Caco-2 (cell line): ENCODE measurements at regions of chr6 and their contacts with region 1.

Region 1: GRCh38 chr6:159806021-159806458 is 6.0 kb downstream of the PNLDC1 start:
- DNase-seq: peak; percentile 39 to 60
- H3K4me3 ChIP-seq: no peak overlapping the region
- H3K4me3 Mint-ChIP-seq: no peak overlapping the region
- H3K27ac Mint-ChIP-seq: peak overlapping the region; percentile 61
- H3K4me1 ChIP-seq: peaks cover 42% of the 10 kb centered on the region
- H3K4me1 Mint-ChIP-seq: peaks cover 26% of the 10 kb centered on the region
- H3K27me3 ChIP-seq: no peaks in the 10 kb centered on the region
- H3K27me3 Mint-ChIP-seq: no peaks in the 10 kb centered on the region
- CTCF ChIP-seq: no peak

Region 2: GRCh38 chr6:159490298-159490937 is 315.6 kb before region 1 on chr6:
- CTCF ChIA-PET with region 1: no interaction called
- POLR2A ChIA-PET with region 1: no interaction called
- intact Hi-C with region 1: no loop called
- DNase-seq: no peak
- H3K4me3 ChIP-seq: no peak overlapping the region
- H3K4me3 Mint-ChIP-seq: no peak overlapping the region
- H3K27ac Mint-ChIP-seq: no peak overlapping the region
- H3K4me1 ChIP-seq: no peaks in the 10 kb centered on the region
- H3K4me1 Mint-ChIP-seq: no peaks in the 10 kb centered on the region
- H3K27me3 ChIP-seq: no peaks in the 10 kb centered on the region
- H3K27me3 Mint-ChIP-seq: peaks cover 16% of the 10 kb centered on the region
- CTCF ChIP-seq: no peak

Region 3: DNA sequence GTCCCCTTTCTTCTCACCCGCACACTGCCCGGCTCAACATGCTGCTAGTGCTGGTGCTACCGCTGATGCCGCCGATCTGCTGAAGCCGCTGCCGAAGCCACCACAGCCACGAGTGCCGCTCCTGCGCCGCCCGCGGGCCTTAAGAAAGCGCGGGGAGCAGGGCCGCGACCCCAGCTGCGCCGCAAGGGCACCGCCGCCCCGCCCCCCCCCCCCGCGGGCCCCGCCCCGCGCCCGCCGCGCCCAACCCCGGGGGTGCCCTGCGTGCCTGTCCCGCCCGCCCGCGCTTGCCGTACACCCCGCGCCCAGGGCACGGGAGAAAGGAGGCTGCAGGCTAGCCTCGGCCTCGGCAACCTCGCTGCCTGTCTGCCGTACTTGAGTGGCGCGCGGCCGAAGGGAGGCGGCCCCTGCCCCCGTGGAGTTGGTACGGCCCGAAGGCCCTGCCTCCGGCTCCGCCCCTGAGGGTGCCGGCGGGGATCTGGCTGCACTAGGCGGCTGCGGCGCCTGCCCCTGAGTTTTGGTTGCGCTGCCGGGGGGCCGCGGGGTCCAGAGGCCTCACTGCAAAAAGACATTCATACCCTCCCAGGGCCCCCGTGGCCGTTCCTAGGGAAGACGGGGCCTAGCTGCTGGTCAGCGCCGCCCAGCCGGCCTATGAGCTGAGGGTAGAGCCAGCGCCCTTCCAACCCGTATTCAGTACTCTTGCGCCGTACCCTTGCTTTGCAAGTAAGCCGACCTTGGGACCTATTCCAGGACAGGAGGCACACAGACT is 112.7 kb before region 1 on chr6 and contains the start of gene SOD2:
- CTCF ChIA-PET with region 1: no interaction called
- POLR2A ChIA-PET with region 1: no interaction called
- intact Hi-C with region 1: no loop called
- DNase-seq: peak; percentile 90 to 92
- H3K4me3 ChIP-seq: peak within 1 kb of the TSS; percentile 59
- H3K4me3 Mint-ChIP-seq: peak within 1 kb of the TSS; percentile 72
- H3K27ac Mint-ChIP-seq: peak within 1 kb of the TSS; percentile 80
- H3K4me1 ChIP-seq: peaks cover 4% of the 10 kb centered on the region
- H3K4me1 Mint-ChIP-seq: peaks cover 16% of the 10 kb centered on the region
- H3K27me3 ChIP-seq: no peaks in the 10 kb centered on the region
- H3K27me3 Mint-ChIP-seq: no peaks in the 10 kb centered on the region
- CTCF ChIP-seq: no peak
- total RNA-seq, gene SOD2: 109 and 110 TPM in 2 replicates

Region 4: DNA sequence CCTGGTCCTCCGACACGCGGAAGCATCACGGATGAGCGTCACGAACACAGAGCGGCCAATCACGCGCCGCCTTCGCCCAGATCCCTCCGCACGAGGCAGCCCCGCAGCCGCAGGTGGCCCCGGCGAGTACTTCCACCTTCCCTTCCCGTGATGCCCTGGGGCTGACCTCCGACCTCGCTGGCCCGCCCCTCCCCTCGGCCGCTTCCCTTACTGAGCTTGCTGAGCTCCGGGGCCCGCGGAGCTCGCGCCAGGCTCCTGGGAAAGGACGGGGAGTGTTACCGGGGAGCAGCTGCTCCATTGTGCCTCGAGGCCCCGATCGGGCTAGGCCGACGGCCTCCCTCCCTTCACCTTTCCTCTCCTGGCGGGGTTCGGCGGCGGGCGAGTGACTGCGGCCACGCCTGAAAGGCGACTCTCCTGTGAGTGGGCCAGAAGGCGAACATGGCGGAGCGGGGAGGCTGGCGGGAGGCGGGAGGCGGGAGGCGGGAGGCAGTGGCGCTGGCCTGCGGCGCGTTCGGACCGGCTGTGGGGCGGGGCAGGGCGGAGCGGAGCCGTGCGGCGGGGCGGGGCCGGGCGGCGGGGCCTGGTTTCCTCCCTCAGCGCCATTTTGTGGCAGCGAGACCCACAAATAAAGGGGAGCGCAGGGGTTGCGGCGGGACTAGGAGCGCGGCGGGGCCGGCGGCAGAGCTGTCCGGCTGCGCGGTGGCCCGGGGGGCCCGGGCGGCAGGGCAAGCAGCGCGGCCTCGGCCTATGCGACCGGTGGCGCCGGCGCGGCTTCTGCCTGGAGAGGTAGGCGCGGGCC is 78.9 kb before region 1 on chr6 and contains the start of gene WTAP:
- CTCF ChIA-PET with region 1: interaction called, 3 read pairs
- POLR2A ChIA-PET with region 1: interaction called, 11 read pairs
- intact Hi-C with region 1: no loop called
- DNase-seq: peak; percentile 98
- H3K4me3 ChIP-seq: peak within 1 kb of the TSS; percentile 96
- H3K4me3 Mint-ChIP-seq: peak within 1 kb of the TSS; percentile 97
- H3K27ac Mint-ChIP-seq: peak within 1 kb of the TSS; percentile 96
- H3K4me1 ChIP-seq: peaks cover 3% of the 10 kb centered on the region; the same call in 1 of the 2 replicates
- H3K4me1 Mint-ChIP-seq: peaks cover 6% of the 10 kb centered on the region
- H3K27me3 ChIP-seq: no peaks in the 10 kb centered on the region
- H3K27me3 Mint-ChIP-seq: no peaks in the 10 kb centered on the region
- CTCF ChIP-seq: no peak
- total RNA-seq, gene WTAP: 109 and 114 TPM in 2 replicates

Region 5: GRCh38 chr6:159761873-159762680 is 44.0 kb before region 1 on chr6 and contains the start of gene ACAT2:
- CTCF ChIA-PET with region 1: no interaction called
- POLR2A ChIA-PET with region 1: no interaction called
- intact Hi-C with region 1: loop called (anchors 1 kb)
- DNase-seq: peak; percentile 96 to 98
- H3K4me3 ChIP-seq: peak within 1 kb of the TSS; percentile 84
- H3K4me3 Mint-ChIP-seq: peak within 1 kb of the TSS; percentile 82
- H3K27ac Mint-ChIP-seq: peak within 1 kb of the TSS; percentile 98
- H3K4me1 ChIP-seq: peaks cover 16% of the 10 kb centered on the region
- H3K4me1 Mint-ChIP-seq: peaks cover 37% of the 10 kb centered on the region
- H3K27me3 ChIP-seq: no peaks in the 10 kb centered on the region
- H3K27me3 Mint-ChIP-seq: no peaks in the 10 kb centered on the region
- CTCF ChIP-seq: no peak
- total RNA-seq, gene ACAT2: 122 and 131 TPM in 2 replicates

Region 6: GRCh38 chr6:159789377-159790148 is 16.5 kb before region 1 on chr6 and contains the start of gene TCP1:
- CTCF ChIA-PET with region 1: interaction called, 7 read pairs
- POLR2A ChIA-PET with region 1: interaction called, 42 read pairs
- intact Hi-C with region 1: loop called (anchors 1 kb)
- DNase-seq: peak; percentile 98 to 99
- H3K4me3 ChIP-seq: peak within 1 kb of the TSS; percentile 95
- H3K4me3 Mint-ChIP-seq: peak within 1 kb of the TSS; percentile 96
- H3K27ac Mint-ChIP-seq: peak within 1 kb of the TSS; percentile 98
- H3K4me1 ChIP-seq: peaks cover 18% of the 10 kb centered on the region
- H3K4me1 Mint-ChIP-seq: peaks cover 18% of the 10 kb centered on the region
- H3K27me3 ChIP-seq: no peaks in the 10 kb centered on the region
- H3K27me3 Mint-ChIP-seq: no peaks in the 10 kb centered on the region
- CTCF ChIP-seq: no peak
- total RNA-seq, gene TCP1: 286 and 333 TPM in 2 replicates

Region 7: DNA sequence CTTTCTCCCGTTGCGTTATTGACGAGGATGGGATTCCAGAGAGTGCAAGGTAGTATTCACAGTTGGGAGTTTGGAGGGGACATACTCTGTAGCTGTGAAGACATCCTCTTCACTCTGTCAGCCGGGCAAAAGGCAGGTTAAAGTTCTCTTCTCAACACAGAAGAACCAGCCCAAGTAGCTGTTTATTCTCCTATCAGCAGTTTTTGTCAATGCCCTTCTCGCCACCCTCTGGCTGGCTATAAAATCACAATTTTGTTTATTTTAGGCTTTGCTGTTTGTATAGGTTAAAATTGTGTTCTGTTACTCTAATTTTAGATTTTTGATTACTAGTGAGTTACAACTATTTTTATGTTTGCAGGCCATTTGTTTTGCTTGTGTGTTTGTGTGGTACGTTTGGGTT is 46.8 kb after region 1 on chr6:
- CTCF ChIA-PET with region 1: interaction called, 4 read pairs
- POLR2A ChIA-PET with region 1: no interaction called
- intact Hi-C with region 1: loop called (anchors 5 kb)
- DNase-seq: peak in 1 of 2 experiments; percentile 32
- H3K4me3 ChIP-seq: no peak overlapping the region
- H3K4me3 Mint-ChIP-seq: no peak overlapping the region
- H3K27ac Mint-ChIP-seq: no peak overlapping the region
- H3K4me1 ChIP-seq: no peaks in the 10 kb centered on the region
- H3K4me1 Mint-ChIP-seq: no peaks in the 10 kb centered on the region
- H3K27me3 ChIP-seq: no peaks in the 10 kb centered on the region
- H3K27me3 Mint-ChIP-seq: peaks cover 8% of the 10 kb centered on the region
- CTCF ChIP-seq: peak in 1 of 2 experiments; percentile 21

Region 8: GRCh38 chr6:159908535-159908934 is 102.5 kb after region 1 on chr6:
- CTCF ChIA-PET with region 1: no interaction called
- POLR2A ChIA-PET with region 1: no interaction called
- intact Hi-C with region 1: loop called (anchors 5 kb)
- DNase-seq: no peak
- H3K4me3 ChIP-seq: no peak overlapping the region
- H3K4me3 Mint-ChIP-seq: no peak overlapping the region
- H3K27ac Mint-ChIP-seq: no peak overlapping the region
- H3K4me1 ChIP-seq: peaks cover 6% of the 10 kb centered on the region; the same call in 1 of the 2 replicates
- H3K4me1 Mint-ChIP-seq: peaks cover 5% of the 10 kb centered on the region
- H3K27me3 ChIP-seq: no peaks in the 10 kb centered on the region
- H3K27me3 Mint-ChIP-seq: peaks cover 22% of the 10 kb centered on the region
- CTCF ChIP-seq: no peak